Aorta (tissue), 5 donors: ENCODE measurements at regions of chr3 and their contacts with region 1.

Region 1: GRCh38 chr3:189270248-189270832 is 98.6 kb downstream of the TPRG1 start:
- DNase-seq: peak; percentile 72 to 80
- ATAC-seq: peak; percentile 70
- H3K4me3 ChIP-seq: no peak overlapping the region
- H3K27ac ChIP-seq: no peak overlapping the region
- H3K4me1 ChIP-seq: peaks cover 0 to 4% of the 10 kb centered on the region in 2 donors
- H3K27me3 ChIP-seq: no peaks in the 10 kb centered on the region

Region 2: GRCh38 chr3:189512039-189512438 is 241.7 kb after region 1 on chr3:
- intact Hi-C with region 1: loop called in 1 of 2 experiments (anchors 10 kb)
- DNase-seq: no peak
- ATAC-seq: no peak
- H3K4me3 ChIP-seq: no peak overlapping the region
- H3K27ac ChIP-seq: no peak overlapping the region
- H3K4me1 ChIP-seq: no peaks in the 10 kb centered on the region
- H3K27me3 ChIP-seq: no peaks in the 10 kb centered on the region

Region 3: DNA sequence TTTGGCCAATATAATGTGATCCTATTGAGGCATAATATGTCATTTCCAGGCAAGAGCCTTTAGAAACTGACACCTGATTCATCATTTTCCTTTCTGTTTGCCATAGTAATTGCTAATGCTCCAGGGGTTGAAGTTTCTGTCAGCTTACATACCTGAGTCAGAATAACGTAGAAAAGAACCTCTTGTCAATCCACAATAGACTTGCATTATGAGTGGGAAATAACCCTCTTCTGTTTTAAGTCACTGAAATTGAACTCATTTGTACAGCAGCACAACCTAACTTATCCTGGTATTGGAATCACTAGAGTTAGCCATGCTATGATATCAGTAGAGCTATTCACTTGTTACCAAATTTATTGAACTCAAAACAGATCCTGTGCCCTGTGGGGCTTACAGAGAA is 259.1 kb after region 1 on chr3:
- intact Hi-C with region 1: no loop called
- DNase-seq: no peak
- ATAC-seq: no peak
- H3K4me3 ChIP-seq: no peak overlapping the region
- H3K27ac ChIP-seq: no peak overlapping the region
- H3K4me1 ChIP-seq: no peaks in the 10 kb centered on the region
- H3K27me3 ChIP-seq: no peaks in the 10 kb centered on the region

Region 4: GRCh38 chr3:189947948-189948723 is 677.8 kb after region 1 on chr3:
- intact Hi-C with region 1: loop called in 1 of 2 experiments (anchors 5 kb)
- DNase-seq: no peak
- ATAC-seq: no peak
- H3K4me3 ChIP-seq: no peak overlapping the region
- H3K27ac ChIP-seq: no peak overlapping the region
- H3K4me1 ChIP-seq: no peaks in the 10 kb centered on the region
- H3K27me3 ChIP-seq: no peaks in the 10 kb centered on the region